GM18951 (cell line): ENCODE measurements at regions of chr4 and their contacts with region 1.

Region 1: DNA sequence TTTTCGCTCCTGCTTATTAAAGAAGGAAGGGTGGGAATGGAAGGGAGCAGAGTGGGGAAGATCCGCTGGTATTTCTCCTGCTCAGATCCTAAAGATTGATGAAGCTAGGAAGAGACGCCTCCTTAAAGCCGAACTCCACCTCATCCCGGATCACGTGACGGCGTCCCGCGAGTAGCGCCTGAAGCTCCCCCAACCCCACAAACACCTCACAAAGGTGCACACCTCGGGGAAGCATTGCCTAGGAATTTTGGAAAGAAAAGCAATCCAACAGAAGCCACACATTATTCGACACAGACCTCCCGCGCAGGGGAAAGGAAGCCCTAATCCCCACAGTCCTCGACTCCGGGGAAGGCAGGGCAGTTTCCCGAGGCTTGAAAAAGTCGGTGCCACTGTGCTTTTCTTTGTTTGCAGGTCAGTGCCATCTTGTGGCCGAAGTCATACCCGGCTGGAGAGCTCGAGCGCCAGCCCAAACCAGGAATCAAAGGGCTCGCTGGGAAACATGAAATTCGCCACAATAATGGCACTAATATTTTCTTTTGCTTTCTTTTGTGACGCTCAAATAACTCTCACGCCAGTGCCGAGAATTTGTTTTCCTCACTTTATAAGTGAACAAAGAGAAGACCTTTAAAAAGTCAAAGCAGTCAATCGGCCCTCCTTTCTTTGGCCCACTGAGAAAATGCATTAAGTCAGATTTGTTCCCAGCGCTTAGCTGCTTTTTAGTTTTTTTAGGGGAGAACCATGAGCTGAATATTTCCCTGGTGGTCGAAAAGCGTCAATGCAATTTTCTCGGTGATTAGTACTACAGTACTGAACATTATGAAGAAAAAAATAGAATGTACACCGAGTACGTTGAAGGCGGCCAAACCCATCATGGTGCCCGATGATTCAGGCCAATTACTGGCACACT is at the start of gene NPY1R:
- POLR2A ChIP-seq: no peak

Region 2: DNA sequence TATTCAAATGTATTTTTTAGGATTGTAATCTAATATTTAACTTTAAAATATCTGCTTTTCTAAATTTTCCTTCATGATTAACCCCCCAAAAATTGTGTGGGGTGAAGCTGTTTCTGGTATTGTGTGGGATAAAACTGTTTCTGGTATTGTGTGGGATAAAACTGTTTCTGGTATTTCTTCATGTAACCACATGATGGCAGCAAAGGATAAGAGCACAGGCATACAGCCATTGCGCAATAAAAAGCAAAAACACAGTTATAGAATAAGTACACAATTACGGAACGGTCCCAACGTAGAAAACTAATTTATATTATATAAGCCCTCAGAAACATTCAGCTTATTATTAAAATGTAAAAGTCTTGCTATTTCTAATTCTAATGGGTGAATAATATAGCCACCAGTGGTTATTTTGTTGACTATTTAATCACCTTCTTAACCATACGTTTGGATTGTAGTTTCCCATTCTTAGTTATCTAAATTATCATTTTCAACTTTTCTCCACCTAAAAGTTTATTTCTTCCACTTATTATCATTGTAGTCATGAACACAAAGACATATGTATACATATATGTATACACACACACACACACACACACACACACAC is 835.1 kb before region 1 on chr4:
- in situ Hi-C with region 1: loop called (anchors 25 kb)
- POLR2A ChIP-seq: no peak

Region 3: GRCh38 chr4:162830904-162831303 is 501.8 kb before region 1 on chr4:
- in situ Hi-C with region 1: no loop called
- POLR2A ChIP-seq: no peak

Region 4: GRCh38 chr4:163063891-163064290 is 268.9 kb before region 1 on chr4:
- in situ Hi-C with region 1: loop called (anchors 25 kb)
- POLR2A ChIP-seq: no peak

Region 5: DNA sequence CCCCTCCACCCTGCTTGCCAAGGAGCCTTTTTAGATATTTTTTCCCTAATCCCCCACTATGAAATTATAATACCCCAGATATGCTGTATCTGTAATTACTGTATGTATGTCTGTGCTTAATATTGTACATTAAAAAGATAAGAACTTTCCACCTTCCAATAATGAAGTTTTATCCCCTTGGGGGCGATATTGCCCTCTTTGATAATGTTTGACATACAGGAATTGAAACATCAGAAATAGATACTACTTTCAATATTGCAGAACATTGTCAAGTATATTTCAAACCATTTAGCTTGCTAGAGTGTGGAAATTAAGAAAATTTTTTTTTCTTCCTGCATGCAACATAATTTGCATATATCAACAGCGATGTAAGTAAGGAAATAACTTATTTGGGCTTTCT is 225.0 kb before region 1 on chr4:
- in situ Hi-C with region 1: loop called (anchors 10 kb)
- POLR2A ChIP-seq: no peak